Activated CD8-positive, alpha-beta T cell treated with anti-CD3 and anti-CD28 coated beads, Interleukin-2, amount 10 ng/mL, durations not matched to agents 7 days and 5 days (primary cell): ENCODE measurements at regions of chr3 and their contacts with region 1.

Region 1: GRCh38 chr3:16319307-16319706 is 54.3 kb downstream of the OXNAD1 start:
- DNase-seq: peak; percentile 91
- ATAC-seq: peak; percentile 85
- H3K4me3 Mint-ChIP-seq: peak overlapping the region; percentile 30
- H3K27ac Mint-ChIP-seq: peak overlapping the region; percentile 77
- H3K4me1 Mint-ChIP-seq: peaks cover 69% of the 10 kb centered on the region
- H3K27me3 Mint-ChIP-seq: no peaks in the 10 kb centered on the region

Region 2: DNA sequence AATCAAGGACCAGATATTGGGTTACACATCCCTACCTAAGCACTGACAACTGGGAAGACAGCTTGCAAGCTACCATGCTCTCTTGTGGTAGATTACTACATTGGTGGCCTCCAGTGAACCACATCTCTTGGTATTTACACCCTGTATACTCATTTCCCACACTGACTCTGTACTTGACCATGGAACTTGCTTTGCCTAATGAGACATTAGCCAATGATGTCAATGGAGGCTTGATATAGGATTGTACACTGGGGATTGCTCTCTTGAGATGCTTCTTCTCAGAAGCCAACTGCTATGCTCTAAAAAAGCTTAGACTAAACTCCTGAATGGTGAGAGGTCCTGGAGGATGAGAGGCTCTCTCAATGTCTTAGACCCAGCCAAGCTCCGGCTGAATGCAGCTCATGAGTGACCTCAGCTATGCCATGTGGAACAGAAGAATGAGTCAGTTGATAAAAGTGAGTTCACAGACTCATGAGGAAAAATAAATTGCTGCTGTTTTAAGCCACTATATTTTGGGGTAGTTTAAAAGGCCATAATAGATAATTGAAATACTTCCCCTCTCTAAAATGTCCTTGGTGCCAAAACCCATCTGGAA is 206.3 kb before region 1 on chr3:
- CTCF ChIA-PET with region 1: no interaction called
- POLR2A ChIA-PET with region 1: no interaction called
- DNase-seq: no peak
- ATAC-seq: no peak
- H3K4me3 Mint-ChIP-seq: no peak overlapping the region
- H3K27ac Mint-ChIP-seq: no peak overlapping the region
- H3K4me1 Mint-ChIP-seq: no peaks in the 10 kb centered on the region
- H3K27me3 Mint-ChIP-seq: no peaks in the 10 kb centered on the region

Region 3: DNA sequence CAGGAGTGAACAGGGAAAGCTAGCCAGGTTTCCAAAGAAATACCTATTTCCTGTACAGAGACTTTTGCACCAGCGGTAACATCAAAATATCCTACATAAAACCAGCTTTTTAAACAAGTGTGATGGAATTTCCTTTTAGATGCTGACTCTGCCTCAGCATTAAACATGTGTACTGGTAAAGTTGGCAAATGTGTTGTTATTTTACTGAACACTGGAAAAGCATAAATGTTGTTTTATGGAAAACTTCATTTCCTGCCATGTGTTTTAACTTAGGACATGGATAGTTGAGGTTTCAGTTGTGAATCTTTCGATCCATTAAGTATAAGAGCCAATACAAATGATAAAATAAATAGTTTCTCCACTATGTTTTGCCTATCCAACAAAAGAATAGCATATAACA is 38.6 kb before region 1 on chr3:
- CTCF ChIA-PET with region 1: interaction called, 45 read pairs
- POLR2A ChIA-PET with region 1: interaction called, 12 read pairs
- DNase-seq: no peak
- ATAC-seq: no peak
- H3K4me3 Mint-ChIP-seq: no peak overlapping the region
- H3K27ac Mint-ChIP-seq: no peak overlapping the region
- H3K4me1 Mint-ChIP-seq: peaks cover 18% of the 10 kb centered on the region
- H3K27me3 Mint-ChIP-seq: no peaks in the 10 kb centered on the region

Region 4: DNA sequence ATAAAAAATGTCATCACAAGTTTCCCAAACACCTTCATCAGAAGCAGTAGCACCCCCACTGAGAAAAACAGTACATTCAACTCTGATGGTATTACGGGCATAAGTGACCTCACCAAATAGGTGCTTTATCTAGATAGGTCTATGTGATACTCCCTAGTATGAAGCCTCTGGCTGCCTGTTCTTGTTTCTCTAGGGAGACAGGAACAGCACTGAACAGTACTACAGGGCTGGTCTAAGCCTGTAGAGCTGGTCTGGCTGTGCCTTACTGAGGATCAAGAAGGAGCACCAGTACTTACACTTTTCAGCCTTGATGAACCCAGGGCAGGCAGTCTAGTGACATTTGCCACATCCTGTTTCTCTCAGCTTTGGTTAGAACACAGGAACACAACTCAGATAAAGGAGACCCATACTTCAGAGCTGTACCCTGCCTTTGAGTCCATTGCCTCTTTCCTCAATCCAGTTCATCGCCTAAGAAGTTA is 18.4 kb before region 1 on chr3:
- CTCF ChIA-PET with region 1: interaction called, 34 read pairs
- POLR2A ChIA-PET with region 1: interaction called, 41 read pairs
- DNase-seq: peak; percentile 82
- ATAC-seq: peak; percentile 80
- H3K4me3 Mint-ChIP-seq: peak overlapping the region; percentile 80
- H3K27ac Mint-ChIP-seq: peak overlapping the region; percentile 94
- H3K4me1 Mint-ChIP-seq: peaks cover 97% of the 10 kb centered on the region
- H3K27me3 Mint-ChIP-seq: no peaks in the 10 kb centered on the region

Region 5: GRCh38 chr3:16349986-16350596 is 30.8 kb after region 1 on chr3:
- CTCF ChIA-PET with region 1: no interaction called
- POLR2A ChIA-PET with region 1: no interaction called
- DNase-seq: no peak
- ATAC-seq: no peak
- H3K4me3 Mint-ChIP-seq: no peak overlapping the region
- H3K27ac Mint-ChIP-seq: no peak overlapping the region
- H3K4me1 Mint-ChIP-seq: peaks cover 9% of the 10 kb centered on the region
- H3K27me3 Mint-ChIP-seq: no peaks in the 10 kb centered on the region